ENCODE measurements at regions of chr16 and their contacts with region 1.

Region 1: DNA sequence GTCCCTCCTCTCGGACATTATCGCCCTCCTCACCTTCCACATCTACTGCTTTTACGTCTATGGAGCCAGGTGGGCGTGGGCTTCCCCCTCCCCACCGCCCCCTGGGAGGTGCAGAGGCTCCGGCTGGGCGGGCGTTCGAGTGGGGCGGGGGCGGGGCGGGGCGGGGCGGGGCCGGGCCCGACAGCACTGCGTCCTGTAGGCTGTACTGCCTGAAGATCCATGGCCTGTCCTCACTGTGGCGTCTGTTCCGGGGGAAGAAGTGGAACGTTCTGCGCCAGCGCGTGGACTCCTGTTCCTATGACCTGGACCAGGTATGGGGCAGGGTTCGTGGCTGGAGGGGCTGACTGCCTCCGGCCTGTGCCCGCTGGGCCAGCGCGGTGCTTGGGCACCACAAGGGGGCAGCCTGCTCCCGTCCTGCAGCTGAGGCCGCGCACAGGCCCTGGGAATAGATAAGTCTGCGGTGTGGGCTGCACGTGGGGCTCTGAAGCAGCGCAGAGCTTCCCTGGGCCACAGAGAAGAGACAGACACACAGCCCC is 9.2 kb downstream of the PIGQ start:
- DNase-seq: peak; percentile 57 to 83
- ATAC-seq: peak; percentile 90 to 98 (median 95)
- H3K4me3 ChIP-seq: no peak overlapping the region
- H3K4me3 Mint-ChIP-seq: no peak overlapping the region
- H3K27ac ChIP-seq: no peak overlapping the region
- H3K27ac Mint-ChIP-seq: no peak overlapping the region
- H3K4me1 ChIP-seq: peaks cover 8% of the 10 kb centered on the region
- H3K4me1 Mint-ChIP-seq: no peaks in the 10 kb centered on the region
- H3K27me3 ChIP-seq: no peaks in the 10 kb centered on the region
- H3K27me3 Mint-ChIP-seq: no peaks in the 10 kb centered on the region
- CTCF ChIP-seq: peak; percentile 70

Region 2: DNA sequence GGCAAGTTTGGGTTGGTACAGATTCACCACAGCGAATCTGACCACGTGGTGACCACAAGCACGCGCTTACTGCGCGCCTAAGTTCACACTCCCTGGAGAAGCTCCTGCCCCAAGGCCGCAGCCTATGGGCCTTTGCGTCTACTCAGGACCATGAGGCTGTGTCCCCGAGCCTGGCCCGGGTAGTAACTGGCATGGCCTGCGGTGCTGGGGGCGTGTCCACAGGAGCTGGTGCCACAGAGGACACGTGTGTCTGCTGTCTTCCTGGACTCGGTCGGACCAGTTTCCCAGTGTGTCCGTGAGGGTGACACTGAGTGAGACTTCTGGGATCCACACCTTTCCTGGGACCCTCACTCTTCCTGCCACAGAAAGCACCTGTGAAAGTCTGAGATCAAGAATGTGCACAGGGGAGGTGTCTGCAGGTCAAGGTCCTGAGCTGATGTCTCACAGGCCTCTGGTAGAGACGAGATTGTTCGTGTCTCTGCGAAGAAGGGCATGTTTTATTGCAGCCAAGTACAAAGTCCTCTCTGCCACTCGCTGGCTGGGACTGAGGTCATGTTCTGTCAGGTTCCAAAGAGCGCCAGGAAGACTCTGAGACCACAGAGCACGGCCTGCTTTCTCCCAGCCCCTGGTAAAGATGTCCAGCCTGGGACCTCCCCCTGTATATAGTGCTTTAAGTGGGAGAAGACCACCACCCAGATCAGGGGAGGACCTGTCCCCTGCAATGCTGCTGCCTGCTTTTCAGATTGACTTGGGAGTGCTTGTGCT is 76.6 kb before region 1 on chr16:
- intact Hi-C with region 1: no loop called
- DNase-seq: no peak
- ATAC-seq: peak in 1 of 3 donors; percentile 49
- H3K4me3 ChIP-seq: no peak overlapping the region
- H3K4me3 Mint-ChIP-seq: no peak overlapping the region
- H3K27ac ChIP-seq: no peak overlapping the region
- H3K27ac Mint-ChIP-seq: no peak overlapping the region
- H3K4me1 ChIP-seq: peaks cover 3% of the 10 kb centered on the region
- H3K4me1 Mint-ChIP-seq: peaks cover 0 to 9% of the 10 kb centered on the region in 2 donors
- H3K27me3 ChIP-seq: no peaks in the 10 kb centered on the region
- H3K27me3 Mint-ChIP-seq: no peaks in the 10 kb centered on the region
- CTCF ChIP-seq: no peak

Region 3: DNA sequence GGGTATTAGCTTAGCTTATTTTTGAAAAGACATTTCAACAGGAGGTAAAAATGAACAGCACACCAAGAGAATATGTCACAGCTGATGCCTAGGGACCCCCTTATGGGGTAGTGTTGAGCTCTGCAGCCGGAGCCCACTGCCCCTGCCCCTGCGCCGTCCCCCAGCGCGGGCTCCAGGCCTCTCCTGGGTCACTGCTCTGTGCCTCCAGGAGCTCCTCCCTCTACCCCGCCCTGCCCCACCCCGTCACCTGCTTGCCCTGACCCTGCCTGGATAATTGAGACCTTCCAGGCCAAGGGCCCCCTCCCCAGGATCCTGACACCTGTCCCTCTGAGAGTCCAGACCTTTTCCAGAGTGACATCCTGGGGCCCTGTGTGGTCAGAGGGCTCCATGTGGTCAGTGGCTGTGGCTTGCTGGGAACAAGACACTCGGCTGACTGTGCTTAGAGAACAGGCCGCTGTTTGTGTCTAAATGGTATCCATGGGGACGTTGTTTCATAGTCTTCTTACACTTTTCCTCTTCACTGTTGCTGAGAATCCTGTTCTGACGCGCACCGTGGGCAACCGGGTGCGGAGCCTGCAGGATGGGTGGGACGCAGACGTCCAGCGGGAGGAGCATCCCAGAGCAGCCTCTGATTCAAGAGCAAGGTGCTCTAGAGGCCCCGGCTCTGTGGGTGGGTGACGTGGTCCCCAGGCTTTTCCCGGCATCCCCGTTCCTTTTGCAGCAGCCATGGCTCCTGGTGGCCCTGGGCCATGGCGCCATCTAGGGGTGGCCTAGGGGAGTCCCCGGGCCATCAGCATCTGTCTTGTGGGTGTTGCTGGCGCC is 31.8 kb after region 1 on chr16:
- intact Hi-C with region 1: loop called (anchors 2 kb)
- DNase-seq: peak; percentile 62 to 78
- ATAC-seq: peak; percentile 74 to 84 (median 78)
- H3K4me3 ChIP-seq: no peak overlapping the region
- H3K4me3 Mint-ChIP-seq: no peak overlapping the region
- H3K27ac ChIP-seq: no peak overlapping the region
- H3K27ac Mint-ChIP-seq: peak overlapping the region in 1 of 2 donors; percentile 31
- H3K4me1 ChIP-seq: peaks cover 6% of the 10 kb centered on the region
- H3K4me1 Mint-ChIP-seq: peaks cover 5 to 16% of the 10 kb centered on the region in 2 donors
- H3K27me3 ChIP-seq: no peaks in the 10 kb centered on the region
- H3K27me3 Mint-ChIP-seq: no peaks in the 10 kb centered on the region
- CTCF ChIP-seq: peak; percentile 77

Region 4: GRCh38 chr16:813204-813915 is 234.4 kb after region 1 on chr16:
- intact Hi-C with region 1: no loop called
- DNase-seq: peak in 1 of 2 donors; percentile 69
- ATAC-seq: peak in 2 of 3 donors; percentile 50 to 65
- H3K4me3 ChIP-seq: no peak overlapping the region
- H3K4me3 Mint-ChIP-seq: no peak overlapping the region
- H3K27ac ChIP-seq: no peak overlapping the region
- H3K27ac Mint-ChIP-seq: no peak overlapping the region
- H3K4me1 ChIP-seq: peaks cover 9% of the 10 kb centered on the region
- H3K4me1 Mint-ChIP-seq: peaks cover 4 to 9% of the 10 kb centered on the region in 2 donors
- H3K27me3 ChIP-seq: peaks cover 16% of the 10 kb centered on the region
- H3K27me3 Mint-ChIP-seq: peaks cover 13 to 19% of the 10 kb centered on the region in 2 donors
- CTCF ChIP-seq: no peak

Measured in natural killer cell (primary cell).